ENCODE measurements at regions of chr5 and their contacts with region 1.

Region 1: GRCh38 chr5:132591145-132591544 is 34.4 kb downstream of the RAD50 start:
- DNase-seq: peak; percentile 33
- ATAC-seq: peak; percentile 59
- H3K4me3 ChIP-seq: no peak overlapping the region
- H3K27ac ChIP-seq: no peak overlapping the region
- H3K4me1 ChIP-seq: no peaks in the 10 kb centered on the region
- H3K27me3 ChIP-seq: no peaks in the 10 kb centered on the region
- CTCF ChIP-seq: peak; percentile 63

Region 2: GRCh38 chr5:132629230-132629944 is 38.2 kb after region 1 on chr5:
- CTCF ChIA-PET with region 1: no interaction called
- POLR2A ChIA-PET with region 1: no interaction called
- intact Hi-C with region 1: no loop called
- DNase-seq: no peak
- ATAC-seq: no peak
- H3K4me3 ChIP-seq: no peak overlapping the region
- H3K27ac ChIP-seq: no peak overlapping the region
- H3K4me1 ChIP-seq: no peaks in the 10 kb centered on the region
- H3K27me3 ChIP-seq: no peaks in the 10 kb centered on the region
- CTCF ChIP-seq: no peak

Region 3: GRCh38 chr5:132677191-132677590 is 86.0 kb after region 1 on chr5:
- CTCF ChIA-PET with region 1: interaction called, 3 read pairs
- POLR2A ChIA-PET with region 1: no interaction called
- intact Hi-C with region 1: loop called (anchors 1 kb)
- DNase-seq: peak; percentile 88
- ATAC-seq: peak; percentile 98
- H3K4me3 ChIP-seq: no peak overlapping the region
- H3K27ac ChIP-seq: 0 out of 2 replicates have a peak overlapping the region, but pooled peaks have one; percentile 8
- H3K4me1 ChIP-seq: peaks cover 42% of the 10 kb centered on the region
- H3K27me3 ChIP-seq: no peaks in the 10 kb centered on the region
- CTCF ChIP-seq: peak; percentile 74